ENCODE measurements at regions of chr17 and their contacts with region 1.

Region 1: DNA sequence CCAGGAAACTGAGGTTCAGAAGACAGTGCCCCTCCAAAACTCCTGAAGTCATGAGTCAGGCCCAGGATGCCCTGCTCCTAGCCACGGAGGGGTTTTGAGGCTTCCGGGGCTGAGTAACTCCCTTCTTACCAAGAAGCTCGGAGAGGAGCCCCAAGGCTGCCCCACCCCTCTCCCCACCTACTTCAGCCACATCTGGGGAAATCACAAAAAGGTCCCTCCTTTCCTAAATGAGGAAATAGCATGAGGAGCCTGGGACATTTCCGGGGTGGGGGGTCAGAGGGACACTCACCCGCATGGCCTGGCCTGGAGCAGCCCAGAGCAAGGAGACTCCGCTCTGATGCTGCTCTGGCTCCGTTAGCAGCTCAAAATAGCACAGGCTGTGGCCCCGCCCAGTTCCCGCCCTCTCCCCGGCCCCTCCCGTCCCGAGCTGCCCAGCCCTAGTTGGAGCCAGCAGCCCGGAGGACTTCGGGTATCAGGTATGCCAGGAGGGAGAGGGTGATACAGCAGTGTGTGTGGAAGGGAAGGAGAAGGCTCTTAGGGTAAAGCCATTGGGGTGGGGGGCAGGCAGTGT is 40.1 kb downstream of the MYO18A start:
- DNase-seq: peak; percentile 95
- H3K4me3 Mint-ChIP-seq: peak overlapping the region; percentile 88
- H3K27ac Mint-ChIP-seq: peak overlapping the region; percentile 96
- H3K4me1 Mint-ChIP-seq: peaks cover 65% of the 10 kb centered on the region
- H3K27me3 Mint-ChIP-seq: no peaks in the 10 kb centered on the region

Region 2: GRCh38 chr17:29111816-29112499 is 28.2 kb before region 1 on chr17:
- intact Hi-C with region 1: no loop called
- DNase-seq: peak; percentile 91
- H3K4me3 Mint-ChIP-seq: no peak overlapping the region
- H3K27ac Mint-ChIP-seq: no peak overlapping the region
- H3K4me1 Mint-ChIP-seq: peaks cover 5% of the 10 kb centered on the region
- H3K27me3 Mint-ChIP-seq: no peaks in the 10 kb centered on the region

Region 3: GRCh38 chr17:29124117-29124924 is 15.8 kb before region 1 on chr17:
- intact Hi-C with region 1: loop called (anchors 1 kb)
- DNase-seq: peak; percentile 83
- H3K4me3 Mint-ChIP-seq: no peak overlapping the region
- H3K27ac Mint-ChIP-seq: no peak overlapping the region
- H3K4me1 Mint-ChIP-seq: peaks cover 1% of the 10 kb centered on the region
- H3K27me3 Mint-ChIP-seq: no peaks in the 10 kb centered on the region

Region 4: DNA sequence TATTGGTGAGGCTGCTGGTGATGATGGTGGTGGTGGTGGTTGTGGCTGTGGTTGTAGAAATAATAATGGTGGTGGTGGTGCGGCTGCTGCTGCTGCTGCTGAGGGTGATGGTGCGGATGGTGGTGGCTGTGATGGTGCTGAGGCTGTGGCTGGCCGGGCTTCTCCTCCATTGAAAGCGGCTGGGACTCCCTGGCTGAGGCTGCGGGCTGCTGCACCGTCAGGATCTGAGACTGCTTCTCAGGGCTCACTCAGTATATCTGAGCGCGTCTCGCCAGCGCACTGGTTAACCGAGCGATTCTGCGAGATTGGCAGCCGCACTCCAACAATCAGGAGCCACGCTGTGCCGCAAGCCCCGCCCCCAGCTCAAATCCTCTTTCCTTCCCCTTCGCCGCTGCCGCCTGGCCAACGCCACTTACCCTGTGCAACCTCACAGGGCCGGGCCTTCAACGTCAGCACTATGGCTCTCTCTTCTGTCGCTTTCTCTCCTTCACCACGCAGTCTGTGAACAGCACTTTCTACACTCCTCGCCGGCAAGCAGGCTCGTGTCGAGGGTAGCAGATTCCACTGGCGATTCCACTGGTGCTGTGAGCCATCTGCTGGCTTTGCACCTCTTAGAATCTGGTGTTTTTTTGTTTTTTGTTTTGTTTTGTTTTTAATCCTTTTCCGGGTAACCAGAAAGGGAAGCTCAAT is 153.9 kb after region 1 on chr17 and contains the start of gene NUFIP2:
- intact Hi-C with region 1: loop called (anchors 1 kb)
- DNase-seq: peak; percentile 99
- H3K4me3 Mint-ChIP-seq: peak within 1 kb of the TSS; percentile 99
- H3K27ac Mint-ChIP-seq: peak within 1 kb of the TSS; percentile 99
- H3K4me1 Mint-ChIP-seq: peaks cover 28% of the 10 kb centered on the region
- H3K27me3 Mint-ChIP-seq: no peaks in the 10 kb centered on the region
- total RNA-seq, gene NUFIP2: 83.2 and 89.7 TPM in 2 replicates

Measured in activated CD4-positive, alpha-beta T cell treated with anti-CD3 and anti-CD28 coated beads, Interleukin-2, amount 10 ng/mL, durations not matched to agents 24 days and 14 days (primary cell).